AG04449 (cell line): ENCODE measurements at regions of chr10 and their contacts with region 1.

Region 1: DNA sequence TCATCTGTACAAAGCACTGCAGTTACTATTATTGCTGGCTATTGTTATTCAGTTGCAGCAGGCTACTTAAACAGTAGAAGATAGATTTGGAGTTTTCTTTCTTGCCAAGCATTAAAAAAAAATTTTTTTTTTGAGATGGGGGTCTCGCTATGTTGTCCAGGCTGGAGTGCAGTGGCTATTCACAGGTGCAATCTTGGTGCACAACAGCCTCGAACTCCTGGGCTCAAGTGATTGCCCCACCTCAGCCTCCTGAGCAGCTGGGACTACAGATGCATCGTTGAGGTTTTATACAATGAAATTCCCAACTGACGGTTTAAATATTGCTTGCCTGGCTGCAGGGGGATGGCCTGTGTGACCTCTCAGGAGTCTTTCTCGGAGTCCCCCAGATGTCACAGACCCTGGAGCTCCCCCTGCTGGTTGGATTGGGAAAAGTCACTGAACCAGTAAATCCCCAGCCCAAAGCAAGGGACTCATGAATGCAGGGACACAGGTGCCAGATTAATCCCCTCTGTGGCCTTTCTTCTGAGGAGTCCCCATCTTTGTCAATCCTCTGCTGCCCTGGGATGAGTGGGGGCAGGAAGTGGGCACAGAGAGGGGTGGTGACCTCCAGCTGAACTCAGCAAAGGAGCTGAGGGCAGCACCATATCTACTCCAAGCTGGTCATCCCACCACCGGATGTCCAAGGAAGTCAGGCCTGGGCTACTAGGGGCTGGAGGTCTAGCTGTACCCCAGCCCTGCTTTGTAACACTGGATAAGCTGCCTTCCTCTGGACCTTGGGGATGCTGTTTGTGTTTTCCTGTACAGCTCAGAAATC is 149.6 kb downstream of the C10orf105 start:
- DNase-seq: no peak
- H3K4me3 ChIP-seq: no peak overlapping the region
- CTCF ChIP-seq: peak; percentile 84

Region 2: GRCh38 chr10:71319042-71319799 is 250.8 kb before region 1 on chr10 and contains the start of gene SLC29A3:
- CTCF ChIA-PET with region 1: interaction called, 243 read pairs
- POLR2A ChIA-PET with region 1: no interaction called
- DNase-seq: no peak
- H3K4me3 ChIP-seq: peak within 1 kb of the TSS; percentile 72
- CTCF ChIP-seq: peak; percentile 88

Region 3: GRCh38 chr10:71383972-71384687 is 185.9 kb before region 1 on chr10:
- CTCF ChIA-PET with region 1: interaction called, 33 read pairs
- POLR2A ChIA-PET with region 1: no interaction called
- DNase-seq: no peak
- H3K4me3 ChIP-seq: no peak overlapping the region
- CTCF ChIP-seq: peak; percentile 97

Region 4: DNA sequence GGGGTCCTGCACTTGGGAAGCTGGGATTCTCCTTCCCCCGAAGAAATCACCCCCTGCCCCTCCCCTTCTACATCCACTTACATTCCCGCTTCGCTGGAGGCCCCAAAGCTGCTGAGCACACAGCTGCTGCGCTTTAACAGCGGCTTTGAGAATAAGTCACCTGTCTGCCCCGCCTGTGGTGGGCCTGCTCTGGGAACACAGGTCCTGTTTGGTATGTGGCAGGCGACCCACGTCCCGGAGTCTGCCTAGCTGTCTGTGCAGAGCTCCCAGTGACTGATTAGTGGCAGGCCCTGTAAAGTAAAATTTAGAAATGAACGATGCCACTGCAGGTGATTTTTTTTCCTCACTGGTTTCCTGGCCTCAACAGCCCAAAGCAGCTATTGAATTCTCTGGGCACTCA is 126.3 kb before region 1 on chr10:
- CTCF ChIA-PET with region 1: no interaction called
- POLR2A ChIA-PET with region 1: no interaction called
- DNase-seq: no peak
- H3K4me3 ChIP-seq: no peak overlapping the region
- CTCF ChIP-seq: no peak

Region 5: GRCh38 chr10:71554671-71555070 is 15.3 kb before region 1 on chr10:
- CTCF ChIA-PET with region 1: interaction called, 55 read pairs
- POLR2A ChIA-PET with region 1: no interaction called
- DNase-seq: no peak
- H3K4me3 ChIP-seq: no peak overlapping the region
- CTCF ChIP-seq: no peak